ENCODE measurements at regions of chr11 and their contacts with region 1.

Region 1: GRCh38 chr11:57761301-57762234 is at the start of gene CTNND1:
- DNase-seq: peak; percentile 98
- H3K4me3 Mint-ChIP-seq: peak within 1 kb of the TSS; percentile 83
- H3K27ac Mint-ChIP-seq: peak within 1 kb of the TSS; percentile 96
- H3K4me1 Mint-ChIP-seq: peaks cover 25% of the 10 kb centered on the region
- H3K27me3 Mint-ChIP-seq: no peaks in the 10 kb centered on the region
- CTCF ChIP-seq: no peak
- total RNA-seq, gene CTNND1: 114 and 118 TPM in 2 replicates

Region 2: GRCh38 chr11:57515332-57516060 is 246.1 kb before region 1 on chr11 and contains the start of gene SLC43A1:
- CTCF ChIA-PET with region 1: no interaction called
- POLR2A ChIA-PET with region 1: no interaction called
- intact Hi-C with region 1: no loop called
- DNase-seq: peak; percentile 42
- H3K4me3 Mint-ChIP-seq: peak within 1 kb of the TSS; percentile 83
- H3K27ac Mint-ChIP-seq: peak within 1 kb of the TSS; percentile 21
- H3K4me1 Mint-ChIP-seq: no peaks in the 10 kb centered on the region
- H3K27me3 Mint-ChIP-seq: no peaks in the 10 kb centered on the region
- CTCF ChIP-seq: no peak
- total RNA-seq, gene SLC43A1: 1.7 and 3.2 TPM in 2 replicates

Region 3: GRCh38 chr11:57667736-57668435 is 93.7 kb before region 1 on chr11 and contains the start of gene ZDHHC5:
- CTCF ChIA-PET with region 1: no interaction called
- POLR2A ChIA-PET with region 1: interaction called, 20 read pairs
- intact Hi-C with region 1: no loop called
- DNase-seq: peak; percentile 99
- H3K4me3 Mint-ChIP-seq: peak within 1 kb of the TSS; percentile 96
- H3K27ac Mint-ChIP-seq: peak within 1 kb of the TSS; percentile 100
- H3K4me1 Mint-ChIP-seq: peaks cover 18% of the 10 kb centered on the region
- H3K27me3 Mint-ChIP-seq: no peaks in the 10 kb centered on the region
- CTCF ChIP-seq: peak; percentile 44
- total RNA-seq, gene ZDHHC5: 73.8 and 74.6 TPM in 2 replicates

Region 4: GRCh38 chr11:57741132-57742086 is 20.2 kb before region 1 on chr11 and contains the start of gene SELENOH:
- CTCF ChIA-PET with region 1: interaction called, 7 read pairs
- POLR2A ChIA-PET with region 1: interaction called, 109 read pairs
- intact Hi-C with region 1: no loop called
- DNase-seq: peak; percentile 90
- H3K4me3 Mint-ChIP-seq: peak within 1 kb of the TSS; percentile 89
- H3K27ac Mint-ChIP-seq: peak within 1 kb of the TSS; percentile 99
- H3K4me1 Mint-ChIP-seq: no peaks in the 10 kb centered on the region
- H3K27me3 Mint-ChIP-seq: no peaks in the 10 kb centered on the region
- CTCF ChIP-seq: no peak
- total RNA-seq, gene SELENOH: 60.3 and 84.5 TPM in 2 replicates

Region 5: DNA sequence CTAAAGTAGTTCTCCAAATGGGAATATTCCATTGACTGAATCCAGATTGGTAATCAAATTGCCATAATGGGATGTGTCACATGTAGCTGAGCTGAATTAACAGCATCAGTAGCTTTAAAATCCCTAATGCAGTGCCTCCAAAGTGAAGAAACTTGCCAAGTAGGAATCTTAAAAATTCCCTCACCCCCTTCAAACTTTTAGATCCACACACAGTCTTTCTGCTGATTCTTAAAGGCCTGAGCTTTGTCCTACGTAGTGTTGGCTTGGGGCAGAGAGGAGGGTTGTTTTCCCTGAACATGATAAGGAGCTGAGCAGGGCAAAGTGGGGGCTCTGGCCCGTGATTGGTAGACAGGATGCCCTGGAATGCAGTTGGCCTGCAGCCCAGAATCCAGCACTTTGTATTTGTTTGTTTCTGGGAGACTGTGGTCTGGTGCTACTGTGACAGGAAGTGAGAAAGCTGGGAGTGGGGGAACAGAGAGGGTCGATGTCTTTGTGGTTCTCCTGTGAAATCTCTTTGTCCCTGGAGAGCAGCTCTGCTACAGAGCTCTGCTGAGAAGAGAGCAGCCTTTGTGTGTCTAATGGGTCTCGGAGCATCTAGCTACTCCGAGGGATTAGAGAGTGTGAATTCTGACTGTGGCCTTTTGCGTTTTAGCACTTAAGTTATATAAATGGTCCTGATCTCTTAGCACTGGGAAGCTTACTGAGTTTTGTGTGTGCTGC is 16.9 kb after region 1 on chr11:
- CTCF ChIA-PET with region 1: interaction called, 117 read pairs
- POLR2A ChIA-PET with region 1: interaction called, 285 read pairs
- intact Hi-C with region 1: loop called (anchors 2 kb)
- DNase-seq: peak; percentile 96
- H3K4me3 Mint-ChIP-seq: peak overlapping the region; percentile 49
- H3K27ac Mint-ChIP-seq: peak overlapping the region; percentile 85
- H3K4me1 Mint-ChIP-seq: peaks cover 58% of the 10 kb centered on the region
- H3K27me3 Mint-ChIP-seq: no peaks in the 10 kb centered on the region
- CTCF ChIP-seq: no peak

Region 6: GRCh38 chr11:57792060-57792541 is 30.5 kb after region 1 on chr11:
- CTCF ChIA-PET with region 1: interaction called, 312 read pairs
- POLR2A ChIA-PET with region 1: interaction called, 210 read pairs
- intact Hi-C with region 1: no loop called
- DNase-seq: peak; percentile 49
- H3K4me3 Mint-ChIP-seq: peak overlapping the region; percentile 70
- H3K27ac Mint-ChIP-seq: peak overlapping the region; percentile 84
- H3K4me1 Mint-ChIP-seq: peaks cover 46% of the 10 kb centered on the region
- H3K27me3 Mint-ChIP-seq: no peaks in the 10 kb centered on the region
- CTCF ChIP-seq: no peak

Region 7: GRCh38 chr11:58059007-58059350 is 297.4 kb after region 1 on chr11:
- CTCF ChIA-PET with region 1: interaction called, 5 read pairs
- POLR2A ChIA-PET with region 1: interaction called, 3 read pairs
- intact Hi-C with region 1: loop called (anchors 5 kb)
- DNase-seq: peak; percentile 64
- H3K4me3 Mint-ChIP-seq: no peak overlapping the region
- H3K27ac Mint-ChIP-seq: peak overlapping the region; percentile 46
- H3K4me1 Mint-ChIP-seq: peaks cover 16% of the 10 kb centered on the region
- H3K27me3 Mint-ChIP-seq: no peaks in the 10 kb centered on the region
- CTCF ChIP-seq: no peak

Measured in MCF 10A (cell line).